HepG2 (cell line): ENCODE measurements at regions of chr2 and their contacts with region 1.

Region 1: DNA sequence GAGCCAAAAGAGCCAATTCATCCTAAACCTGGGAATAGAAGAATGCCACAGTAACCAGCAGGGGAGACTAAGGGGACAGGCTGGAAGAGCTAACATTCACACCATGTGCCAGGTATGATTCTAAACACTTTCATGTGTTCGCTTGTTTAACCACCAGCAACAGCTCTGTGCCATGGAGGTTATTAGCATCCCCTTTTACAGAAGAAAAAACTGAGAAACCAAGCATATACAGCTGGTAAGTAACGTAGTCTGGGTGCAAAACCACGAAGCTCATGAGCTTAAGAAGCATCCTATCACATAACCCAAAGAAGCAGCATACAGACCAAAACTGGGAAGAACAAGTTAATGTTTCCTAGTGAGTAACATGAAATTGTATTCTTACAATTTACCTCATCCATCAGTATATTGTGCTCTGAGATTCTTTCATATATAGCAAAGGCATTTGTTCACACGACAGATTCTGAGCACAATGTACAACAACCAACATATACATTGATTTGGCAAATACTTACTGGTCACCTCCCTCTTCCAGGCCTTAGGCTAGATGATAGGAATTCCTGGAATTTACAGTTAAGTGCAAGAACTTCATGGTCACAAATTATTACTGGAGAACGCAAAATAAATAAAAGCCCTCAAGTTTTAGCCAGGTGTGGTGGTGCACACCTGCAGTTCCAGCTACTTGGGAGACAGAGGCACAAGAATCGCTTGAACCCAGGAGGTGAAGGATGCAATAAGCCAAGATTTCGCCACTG is 36.5 kb upstream of the HNRNPA3 start:
- DNase-seq: peak; percentile 70
- ATAC-seq: peak; percentile 83
- H3K4me3 ChIP-seq: no peak overlapping the region
- H3K27ac ChIP-seq: no peak overlapping the region
- H3K4me1 ChIP-seq: peaks cover 76% of the 10 kb centered on the region
- H3K27me3 ChIP-seq: no peaks in the 10 kb centered on the region
- CTCF ChIP-seq: no peak
- EP300 ChIP-seq: no peak
- POLR2A ChIP-seq: no peak
- RAD21 ChIP-seq: no peak

Region 2: DNA sequence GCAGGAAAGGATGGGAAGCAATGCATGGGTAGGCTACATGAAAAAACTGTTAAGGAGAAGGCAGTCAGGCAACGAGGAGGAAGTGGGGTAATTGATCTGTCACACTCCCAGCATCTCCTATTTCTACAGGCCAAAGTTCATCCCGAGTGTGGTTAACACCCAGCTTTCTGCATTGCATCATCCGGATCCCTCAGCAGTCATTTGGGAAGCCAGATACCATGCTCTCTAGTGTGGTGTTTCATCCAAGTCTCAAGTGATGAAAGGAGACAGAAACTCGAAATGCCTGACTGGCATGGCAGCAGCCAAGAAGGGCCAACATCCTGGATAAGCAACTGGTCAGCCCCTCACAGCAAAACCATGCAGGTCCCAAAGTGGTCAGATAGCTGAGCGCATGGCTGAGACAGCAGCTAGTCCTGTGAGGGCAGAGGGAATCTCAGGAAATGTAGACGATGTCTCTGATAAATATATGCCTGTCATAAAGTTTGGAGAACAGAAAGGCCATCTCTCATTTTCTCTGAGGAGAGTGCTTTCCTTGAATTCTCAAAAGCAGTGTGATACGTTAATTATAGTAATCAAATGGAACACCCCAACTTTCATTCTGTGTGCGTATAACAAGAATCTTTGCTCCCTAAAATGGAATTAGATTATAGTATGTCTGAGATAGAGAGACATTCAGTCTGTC is 11.7 kb after region 1 on chr2:
- CTCF ChIA-PET with region 1: no interaction called
- POLR2A ChIA-PET with region 1: interaction called, 13 read pairs
- in situ Hi-C with region 1: no loop called
- intact Hi-C with region 1: no loop called
- DNase-seq: peak; percentile 95
- ATAC-seq: peak; percentile 83
- H3K4me3 ChIP-seq: peak overlapping the region; percentile 10 to 56 (median 17)
- H3K27ac ChIP-seq: peak overlapping the region; percentile 90
- H3K4me1 ChIP-seq: peaks cover 70% of the 10 kb centered on the region
- H3K27me3 ChIP-seq: no peaks in the 10 kb centered on the region
- CTCF ChIP-seq: no peak
- EP300 ChIP-seq: peak; percentile 39 to 91; a peak in 2 of 4 replicates
- POLR2A ChIP-seq: peak; percentile 66 to 71; a peak in 3 of 4 replicates
- RAD21 ChIP-seq: peak; percentile 6; the same call in 1 of the 2 replicates